Panc1 (cell line): ENCODE measurements at regions of chr11 and their contacts with region 1.

Region 1: GRCh38 chr11:100769165-100769564 is 82.1 kb downstream of the ARHGAP42 start:
- DNase-seq: no peak
- ATAC-seq: no peak
- H3K4me3 ChIP-seq: no peak overlapping the region
- H3K27ac ChIP-seq: no peak overlapping the region
- H3K4me1 ChIP-seq: no peaks in the 10 kb centered on the region
- H3K27me3 ChIP-seq: no peaks in the 10 kb centered on the region
- CTCF ChIP-seq: no peak

Region 2: GRCh38 chr11:100759106-100759505 is 10.1 kb before region 1 on chr11:
- CTCF ChIA-PET with region 1: no interaction called
- POLR2A ChIA-PET with region 1: interaction called, 11 read pairs
- in situ Hi-C with region 1: no loop called
- intact Hi-C with region 1: no loop called
- DNase-seq: no peak
- ATAC-seq: no peak
- H3K4me3 ChIP-seq: no peak overlapping the region
- H3K27ac ChIP-seq: no peak overlapping the region
- H3K4me1 ChIP-seq: no peaks in the 10 kb centered on the region
- H3K27me3 ChIP-seq: no peaks in the 10 kb centered on the region
- CTCF ChIP-seq: no peak

Region 3: GRCh38 chr11:100794446-100794845 is 25.3 kb after region 1 on chr11:
- CTCF ChIA-PET with region 1: no interaction called
- POLR2A ChIA-PET with region 1: no interaction called
- in situ Hi-C with region 1: no loop called
- intact Hi-C with region 1: no loop called
- DNase-seq: no peak
- ATAC-seq: no peak
- H3K4me3 ChIP-seq: no peak overlapping the region
- H3K27ac ChIP-seq: no peak overlapping the region
- H3K4me1 ChIP-seq: no peaks in the 10 kb centered on the region
- H3K27me3 ChIP-seq: no peaks in the 10 kb centered on the region
- CTCF ChIP-seq: no peak